Activated CD4-positive, alpha-beta memory T cell treated with anti-CD3 and anti-CD28 coated beads for 36 hours (primary cell): ENCODE measurements at regions of chr4 and their contacts with region 1.

Region 1: DNA sequence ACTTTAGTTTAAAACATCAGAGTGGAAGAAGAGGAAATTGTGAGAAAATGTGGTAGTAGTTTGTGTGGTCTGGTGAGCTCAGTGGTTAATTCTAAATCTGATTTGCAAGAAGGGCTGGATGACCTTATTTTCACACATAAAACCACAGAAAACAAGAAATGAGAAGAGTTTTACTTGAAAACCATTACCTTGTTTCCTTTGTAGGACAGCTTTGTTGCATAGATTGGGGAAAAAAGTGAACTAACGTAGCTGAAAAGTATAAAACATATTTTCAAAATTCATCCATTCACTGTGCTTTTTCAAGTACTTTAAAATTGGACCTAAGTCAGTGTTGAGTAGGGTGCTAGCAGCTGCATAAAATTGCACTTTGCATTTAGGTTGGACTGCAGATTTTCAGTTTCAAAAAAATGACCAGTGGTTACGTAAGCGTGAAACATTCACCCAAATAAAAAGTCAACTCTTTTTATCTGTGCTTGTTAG is 211.3 kb downstream of the ARHGAP10 start:
- DNase-seq: no peak
- H3K4me3 Mint-ChIP-seq: no peak overlapping the region
- H3K27ac Mint-ChIP-seq: peak overlapping the region; percentile 2
- H3K4me1 Mint-ChIP-seq: peaks cover 26% of the 10 kb centered on the region
- H3K27me3 Mint-ChIP-seq: no peaks in the 10 kb centered on the region

Region 2: DNA sequence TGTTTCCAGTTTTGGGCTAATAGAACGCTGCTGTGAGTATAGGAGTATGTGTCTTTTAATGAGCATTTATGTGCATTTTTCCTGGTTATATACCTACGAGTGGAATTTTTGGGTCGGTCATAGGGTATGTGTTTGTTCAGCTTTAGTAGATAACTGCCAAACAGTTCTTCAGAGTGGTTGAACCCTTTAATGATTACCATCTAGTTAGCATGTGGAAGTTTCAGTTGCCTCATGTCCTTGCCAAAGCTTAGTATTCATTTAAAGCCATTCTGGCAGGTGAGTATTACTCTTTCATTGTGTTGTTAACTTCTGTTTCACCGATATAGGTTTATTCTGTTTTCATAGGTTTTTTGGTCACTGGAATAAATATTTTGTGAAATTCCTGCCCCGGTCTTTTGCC is 17.8 kb after region 1 on chr4:
- CTCF ChIA-PET with region 1: no interaction called
- POLR2A ChIA-PET with region 1: no interaction called
- intact Hi-C with region 1: no loop called
- DNase-seq: no peak
- H3K4me3 Mint-ChIP-seq: no peak overlapping the region
- H3K27ac Mint-ChIP-seq: no peak overlapping the region
- H3K4me1 Mint-ChIP-seq: no peaks in the 10 kb centered on the region
- H3K27me3 Mint-ChIP-seq: no peaks in the 10 kb centered on the region

Region 3: DNA sequence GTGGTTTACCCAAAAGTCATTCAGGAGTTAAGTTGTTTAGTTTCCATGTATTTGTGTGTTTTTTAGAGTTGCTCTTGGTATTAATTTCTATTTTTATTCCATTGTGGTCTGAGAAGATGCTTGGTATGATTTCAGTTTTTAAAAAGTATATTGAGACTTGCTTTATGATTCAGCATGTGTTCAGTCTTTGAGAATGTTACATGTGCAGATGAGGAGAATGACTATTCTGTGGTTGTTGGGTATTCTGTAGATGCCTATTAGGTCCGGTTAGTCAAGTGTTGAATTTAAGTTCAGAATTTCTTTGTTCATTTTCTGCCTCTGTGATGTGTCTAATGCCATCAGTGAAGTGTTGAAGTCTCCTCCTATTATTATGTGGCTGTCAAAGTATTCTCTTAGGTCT is 38.1 kb after region 1 on chr4:
- CTCF ChIA-PET with region 1: no interaction called
- POLR2A ChIA-PET with region 1: no interaction called
- intact Hi-C with region 1: loop called (anchors 2 kb)
- DNase-seq: no peak
- H3K4me3 Mint-ChIP-seq: no peak overlapping the region
- H3K27ac Mint-ChIP-seq: no peak overlapping the region
- H3K4me1 Mint-ChIP-seq: peaks cover 16% of the 10 kb centered on the region
- H3K27me3 Mint-ChIP-seq: no peaks in the 10 kb centered on the region

Region 4: GRCh38 chr4:148735432-148736155 is 792.4 kb after region 1 on chr4:
- CTCF ChIA-PET with region 1: no interaction called
- POLR2A ChIA-PET with region 1: no interaction called
- intact Hi-C with region 1: loop called (anchors 1 kb)
- DNase-seq: peak; percentile 37
- H3K4me3 Mint-ChIP-seq: no peak overlapping the region
- H3K27ac Mint-ChIP-seq: no peak overlapping the region
- H3K4me1 Mint-ChIP-seq: no peaks in the 10 kb centered on the region
- H3K27me3 Mint-ChIP-seq: peaks cover 2% of the 10 kb centered on the region